AG04449 (cell line): ENCODE measurements at regions of chr3 and their contacts with region 1.

Region 1: GRCh38 chr3:112642912-112643506 is 2.1 kb upstream of the CCDC80 start:
- DNase-seq: peak; percentile 67
- H3K4me3 ChIP-seq: no peak overlapping the region
- CTCF ChIP-seq: peak; percentile 82

Region 2: DNA sequence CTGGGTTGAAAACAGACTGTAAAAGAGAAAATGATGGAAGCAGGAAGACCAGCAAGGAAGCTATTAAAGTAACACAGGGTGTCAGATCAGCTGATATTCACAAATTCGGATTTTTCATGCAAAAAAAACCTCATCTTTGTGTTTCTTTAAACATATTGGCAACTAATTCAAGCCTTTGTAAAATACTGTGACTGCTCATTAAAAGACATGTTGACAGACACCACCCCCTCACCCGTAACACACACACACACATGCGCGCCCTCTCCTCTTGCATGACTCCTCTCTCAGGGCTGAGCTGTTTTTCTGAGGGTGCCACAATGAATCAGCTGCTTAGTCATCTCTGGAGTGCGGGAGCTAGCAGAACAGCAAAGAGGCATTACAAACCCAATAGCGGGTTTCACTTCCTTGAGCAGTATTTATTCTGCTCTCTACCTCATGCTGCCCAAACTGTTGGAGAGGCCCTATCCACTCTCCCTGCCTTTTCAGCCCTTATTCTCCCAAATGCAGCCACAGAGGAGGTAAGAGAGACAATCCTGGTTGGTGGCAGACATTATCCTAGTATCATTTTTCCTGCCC is 33.7 kb after region 1 on chr3:
- CTCF ChIA-PET with region 1: interaction called, 10 read pairs
- POLR2A ChIA-PET with region 1: interaction called, 12 read pairs
- DNase-seq: peak; percentile 95
- H3K4me3 ChIP-seq: no peak overlapping the region
- CTCF ChIP-seq: no peak

Region 3: GRCh38 chr3:112734718-112735350 is 91.8 kb after region 1 on chr3:
- CTCF ChIA-PET with region 1: interaction called, 104 read pairs
- POLR2A ChIA-PET with region 1: interaction called, 9 read pairs
- DNase-seq: no peak
- H3K4me3 ChIP-seq: no peak overlapping the region
- CTCF ChIP-seq: peak; percentile 57

Region 4: DNA sequence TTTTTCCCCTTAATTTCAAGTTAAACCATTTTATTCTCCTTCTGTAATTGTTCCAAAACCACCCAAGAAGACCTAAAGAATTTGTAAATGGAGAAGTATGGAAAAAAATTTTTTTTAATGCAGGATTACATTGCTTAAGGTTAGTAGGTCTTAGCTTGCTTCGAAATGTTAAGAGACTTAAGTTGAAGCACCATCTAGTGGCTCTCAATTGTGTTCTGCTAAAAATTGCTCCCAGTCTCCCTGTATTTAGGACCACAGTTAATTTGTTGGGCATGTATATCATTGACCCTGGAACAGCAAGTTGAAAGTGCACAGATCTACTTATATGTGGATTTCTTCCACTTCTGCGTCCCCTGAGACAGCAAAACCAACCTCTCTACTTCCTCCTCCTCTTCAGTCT is 171.3 kb after region 1 on chr3:
- CTCF ChIA-PET with region 1: interaction called, 223 read pairs
- POLR2A ChIA-PET with region 1: interaction called, 31 read pairs
- DNase-seq: peak; percentile 69
- H3K4me3 ChIP-seq: no peak overlapping the region
- CTCF ChIP-seq: peak; percentile 56

Region 5: GRCh38 chr3:112984485-112984884 is 341.5 kb after region 1 on chr3:
- CTCF ChIA-PET with region 1: interaction called, 76 read pairs
- POLR2A ChIA-PET with region 1: no interaction called
- DNase-seq: no peak
- H3K4me3 ChIP-seq: no peak overlapping the region
- CTCF ChIP-seq: no peak